ENCODE measurements at regions of chr4 and their contacts with region 1.

Region 1: DNA sequence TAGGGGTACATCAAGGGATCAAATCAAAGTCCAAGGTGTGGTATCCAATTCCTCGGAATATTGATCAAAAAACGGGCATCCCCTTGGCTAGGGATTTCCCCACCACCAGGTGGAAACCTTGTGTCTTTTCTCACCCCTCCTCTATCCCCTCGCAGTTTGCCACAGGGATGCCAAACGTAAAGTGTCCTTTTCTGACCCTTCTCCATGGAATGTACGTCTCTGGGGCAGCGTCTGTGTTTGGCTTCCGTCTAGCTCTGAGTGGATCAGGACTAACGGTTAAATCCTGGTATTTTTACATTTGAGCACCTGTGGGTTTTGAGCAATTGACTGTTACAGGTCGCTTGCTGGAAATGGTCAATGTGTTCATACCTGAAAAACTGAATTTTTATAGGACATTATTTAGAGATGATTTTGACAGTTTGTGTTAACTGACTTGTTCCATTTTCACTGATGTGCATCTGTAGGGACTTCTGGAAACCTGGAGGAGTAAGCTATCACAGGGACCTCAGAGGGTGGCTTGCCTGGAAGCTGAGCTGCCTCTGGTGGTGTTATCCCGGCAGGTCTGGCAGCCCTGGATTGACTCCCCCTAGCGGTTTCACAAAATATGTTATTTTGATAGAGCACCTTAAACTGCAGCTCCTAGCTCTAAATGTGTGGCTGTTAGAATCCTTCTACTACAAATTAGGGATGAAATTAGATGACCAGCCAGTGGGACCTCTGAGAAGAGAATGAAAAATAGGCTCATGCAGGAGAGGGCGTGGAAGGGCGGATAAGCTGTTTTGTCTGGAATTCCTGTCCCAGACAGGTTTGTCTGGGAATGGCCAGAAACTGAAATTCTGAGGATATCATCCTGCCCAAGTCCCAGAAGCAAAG is 8.8 kb upstream of the MGST2 start:
- DNase-seq: peak; percentile 64
- ATAC-seq: peak; percentile 81
- H3K4me3 Mint-ChIP-seq: peak overlapping the region; percentile 52
- H3K27ac Mint-ChIP-seq: peak overlapping the region; percentile 78
- H3K4me1 Mint-ChIP-seq: peaks cover 24% of the 10 kb centered on the region
- H3K27me3 Mint-ChIP-seq: peaks cover 2% of the 10 kb centered on the region

Region 2: DNA sequence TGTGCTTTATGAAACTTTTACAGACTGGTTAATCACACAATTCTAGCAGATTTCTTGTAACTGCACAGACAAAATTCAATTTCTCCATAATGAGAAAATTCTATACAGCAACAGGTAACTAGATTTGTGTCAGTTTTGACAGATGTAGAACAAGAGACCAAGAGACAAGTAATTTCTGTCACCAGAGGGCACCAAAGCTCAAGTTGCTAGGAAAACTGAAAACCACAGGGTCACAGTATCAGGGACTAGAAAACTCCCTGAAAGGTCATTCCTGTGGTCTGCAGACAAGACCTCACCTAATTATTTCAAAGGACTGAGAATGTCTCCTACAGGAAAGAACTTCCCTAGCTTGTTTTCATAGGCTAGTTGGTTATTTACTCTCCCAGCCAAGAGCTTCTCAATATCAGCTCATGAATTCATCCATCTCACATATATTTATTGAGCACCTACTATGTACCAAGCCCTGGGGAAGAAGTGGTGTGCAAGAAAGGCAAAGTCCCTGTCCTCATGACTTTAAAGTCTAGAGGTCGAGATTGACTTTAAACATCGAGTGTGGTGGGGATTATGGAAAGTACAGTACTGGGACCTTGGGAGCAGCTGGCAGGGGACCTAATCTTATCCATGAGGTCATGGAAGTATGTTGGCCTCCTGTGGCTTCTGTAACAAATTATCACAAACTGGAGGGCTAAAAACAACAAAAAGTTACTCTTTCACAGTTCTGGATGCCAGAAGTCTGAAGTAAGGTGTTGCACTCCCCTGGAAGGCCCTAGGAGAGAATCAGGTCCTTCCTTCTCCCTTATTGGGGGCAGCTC is 53.1 kb before region 1 on chr4:
- CTCF ChIA-PET with region 1: interaction called, 113 read pairs
- POLR2A ChIA-PET with region 1: no interaction called
- DNase-seq: peak; percentile 56
- ATAC-seq: peak; percentile 50
- H3K4me3 Mint-ChIP-seq: no peak overlapping the region
- H3K27ac Mint-ChIP-seq: no peak overlapping the region
- H3K4me1 Mint-ChIP-seq: peaks cover 21% of the 10 kb centered on the region
- H3K27me3 Mint-ChIP-seq: peaks cover 5% of the 10 kb centered on the region

Region 3: DNA sequence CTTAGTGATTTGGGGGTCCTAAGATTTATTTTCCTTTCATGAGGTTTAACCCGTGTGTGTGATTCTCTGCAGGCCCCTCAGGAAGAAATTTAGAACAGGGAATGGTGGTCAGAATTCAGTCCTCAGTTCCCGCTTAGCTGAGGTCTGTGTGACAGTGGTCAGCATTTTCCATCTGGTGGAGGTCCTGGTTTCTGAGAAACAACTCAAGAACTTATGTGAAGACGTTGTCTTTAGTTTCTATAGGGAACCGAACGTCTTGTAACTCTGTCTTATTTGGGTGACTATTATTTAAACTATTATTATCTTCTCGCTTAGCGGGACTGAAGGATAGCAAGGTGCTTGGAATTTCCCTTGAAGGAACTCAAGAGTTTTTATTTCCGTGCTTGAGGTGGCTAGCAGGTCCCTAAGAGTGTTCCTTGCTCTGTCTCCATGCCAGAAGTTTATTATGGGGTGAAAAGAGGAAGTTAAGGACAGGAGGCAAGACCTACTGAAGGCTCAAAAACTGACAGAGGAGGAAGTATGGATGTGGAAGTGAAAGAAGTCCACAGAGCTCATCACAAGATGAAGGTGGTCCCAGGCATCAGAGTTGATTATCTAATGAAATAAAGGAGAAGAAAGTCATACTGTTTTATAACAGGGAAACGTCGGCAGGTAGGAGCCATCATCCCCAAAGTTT is 18.2 kb after region 1 on chr4:
- CTCF ChIA-PET with region 1: interaction called, 11 read pairs
- POLR2A ChIA-PET with region 1: interaction called, 3 read pairs
- DNase-seq: no peak
- ATAC-seq: no peak
- H3K4me3 Mint-ChIP-seq: no peak overlapping the region
- H3K27ac Mint-ChIP-seq: no peak overlapping the region
- H3K4me1 Mint-ChIP-seq: peaks cover 13% of the 10 kb centered on the region
- H3K27me3 Mint-ChIP-seq: no peaks in the 10 kb centered on the region

Region 4: DNA sequence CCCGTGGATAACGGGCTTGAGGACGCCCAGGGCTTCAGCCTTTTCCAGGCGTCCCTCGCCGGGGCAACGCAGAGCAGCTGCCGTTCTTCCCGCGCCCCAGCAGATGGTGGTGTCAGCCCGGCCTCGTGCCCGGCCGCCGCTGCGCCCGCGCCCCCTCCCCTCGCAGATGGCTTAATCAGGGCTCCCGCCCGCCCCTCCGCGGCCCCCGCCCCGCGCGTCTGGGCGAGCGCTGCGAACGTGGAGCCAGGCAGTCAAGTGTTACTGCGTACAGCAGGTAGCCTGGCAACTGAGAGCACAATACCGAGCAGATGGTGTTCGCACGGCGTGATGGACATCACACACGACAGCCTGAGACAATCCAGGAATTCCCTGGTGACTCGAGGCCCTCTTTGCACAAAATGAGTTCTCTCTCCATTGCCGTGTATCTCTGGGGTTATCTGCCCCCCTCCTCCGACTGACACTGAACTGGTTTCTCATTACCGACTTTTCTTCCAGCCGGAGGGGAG is 78.1 kb after region 1 on chr4:
- CTCF ChIA-PET with region 1: interaction called, 10 read pairs
- POLR2A ChIA-PET with region 1: no interaction called
- DNase-seq: peak; percentile 68
- ATAC-seq: peak; percentile 82
- H3K4me3 Mint-ChIP-seq: peak overlapping the region; percentile 66
- H3K27ac Mint-ChIP-seq: no peak overlapping the region
- H3K4me1 Mint-ChIP-seq: peaks cover 13% of the 10 kb centered on the region
- H3K27me3 Mint-ChIP-seq: peaks cover 45% of the 10 kb centered on the region

Measured in activated CD8-positive, alpha-beta T cell treated with anti-CD3 and anti-CD28 coated beads, Interleukin-2, amount 10 ng/mL, durations not matched to agents 7 days and 5 days (primary cell).